SK-N-SH (cell line): ENCODE measurements at regions of chr10 and their contacts with region 1.

Region 1: GRCh38 chr10:73743905-73744663 is at the start of gene SEC24C:
- DNase-seq: peak; percentile 93
- H3K4me3 ChIP-seq: peak within 1 kb of the TSS; percentile 77 to 90
- H3K27ac ChIP-seq: peak within 1 kb of the TSS; percentile 91
- H3K4me1 ChIP-seq: peaks cover 0 to 9% of the 10 kb centered on the region in 2 experiments; a peak in 2 of 4 replicates
- H3K27me3 ChIP-seq: no peaks in the 10 kb centered on the region
- CTCF ChIP-seq: 0 out of 2 replicates have a peak, but pooled peaks have one; percentile 8
- EP300 ChIP-seq: peak in 1 of 2 experiments; percentile 10; a peak in 1 of 4 replicates
- RAD21 ChIP-seq: no peak
- polyA plus RNA-seq, gene SEC24C: 73.6 and 99.2 TPM in 2 replicates

Region 2: GRCh38 chr10:73634421-73634820 is 109.7 kb before region 1 on chr10:
- CTCF ChIA-PET with region 1: no interaction called
- POLR2A ChIA-PET with region 1: no interaction called
- DNase-seq: no peak
- H3K4me3 ChIP-seq: no peak overlapping the region
- H3K27ac ChIP-seq: no peak overlapping the region
- H3K4me1 ChIP-seq: no peaks in the 10 kb centered on the region
- H3K27me3 ChIP-seq: no peaks in the 10 kb centered on the region
- CTCF ChIP-seq: no peak
- EP300 ChIP-seq: no peak
- RAD21 ChIP-seq: no peak

Region 3: GRCh38 chr10:73730153-73730906 is 13.8 kb before region 1 on chr10:
- CTCF ChIA-PET with region 1: interaction called, 3 read pairs
- POLR2A ChIA-PET with region 1: interaction called, 21 read pairs
- DNase-seq: peak; percentile 83
- H3K4me3 ChIP-seq: peak overlapping the region; percentile 75 to 96
- H3K27ac ChIP-seq: peak overlapping the region; percentile 88 to 92
- H3K4me1 ChIP-seq: peaks cover 0 to 6% of the 10 kb centered on the region in 2 experiments; a peak in 2 of 4 replicates
- H3K27me3 ChIP-seq: no peaks in the 10 kb centered on the region
- CTCF ChIP-seq: no peak
- EP300 ChIP-seq: no peak
- RAD21 ChIP-seq: no peak

Region 4: GRCh38 chr10:73772280-73773151 is 28.4 kb after region 1 on chr10:
- CTCF ChIA-PET with region 1: no interaction called
- POLR2A ChIA-PET with region 1: interaction called, 29 read pairs
- DNase-seq: peak; percentile 95
- H3K4me3 ChIP-seq: peak overlapping the region; percentile 79 to 88
- H3K27ac ChIP-seq: peak overlapping the region; percentile 88 to 98
- H3K4me1 ChIP-seq: peaks cover 16 to 30% of the 10 kb centered on the region in 2 experiments
- H3K27me3 ChIP-seq: no peaks in the 10 kb centered on the region
- CTCF ChIP-seq: no peak
- EP300 ChIP-seq: no peak
- RAD21 ChIP-seq: no peak